ENCODE measurements at regions of chr11 and their contacts with region 1.

Region 1: GRCh38 chr11:1515082-1516060 is 28.8 kb upstream of the MOB2 start:
- DNase-seq: peak; percentile 88
- ATAC-seq: peak; percentile 86
- H3K4me3 Mint-ChIP-seq: no peak overlapping the region
- H3K27ac Mint-ChIP-seq: no peak overlapping the region
- H3K4me1 Mint-ChIP-seq: peaks cover 44% of the 10 kb centered on the region
- H3K27me3 Mint-ChIP-seq: no peaks in the 10 kb centered on the region

Region 2: DNA sequence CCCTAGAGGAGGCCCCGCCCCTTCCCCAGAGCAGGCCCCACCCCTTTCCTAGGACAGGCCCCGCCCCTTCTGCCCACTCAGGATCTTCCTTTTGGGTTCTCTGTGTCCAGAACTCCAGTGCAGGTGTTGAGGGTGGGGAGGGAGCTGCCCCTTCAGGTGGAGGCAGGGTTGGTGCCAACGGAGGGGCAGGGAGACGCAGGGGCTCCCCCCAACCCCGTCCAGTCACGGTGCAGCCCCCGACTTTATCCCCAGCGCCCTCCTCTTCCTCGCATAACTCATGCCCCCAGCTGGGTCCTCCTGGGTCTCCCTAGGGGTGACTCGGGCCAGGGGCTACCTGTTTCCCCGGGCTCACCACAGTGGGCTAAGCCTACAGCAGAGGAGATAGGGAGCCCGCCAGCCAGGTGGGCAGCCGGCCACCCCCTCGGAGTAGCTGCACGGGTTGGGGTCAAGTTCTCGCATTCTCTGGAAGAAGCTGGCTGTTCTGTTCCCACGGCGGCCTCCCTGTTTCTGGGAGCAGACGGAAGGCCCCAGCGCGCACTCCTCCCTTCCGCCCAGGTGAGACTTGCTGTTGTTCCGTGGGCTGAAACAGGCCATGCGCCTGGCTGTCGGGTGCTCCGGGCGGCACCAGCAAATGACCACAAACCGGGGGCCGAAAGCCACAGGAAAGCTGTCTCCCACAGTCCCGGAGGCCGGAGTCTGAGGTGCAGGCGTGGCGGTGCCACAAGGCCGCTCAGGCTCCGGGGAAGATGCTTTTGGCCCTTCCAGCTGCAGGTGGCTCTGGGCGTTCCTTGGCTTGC is 401.8 kb before region 1 on chr11:
- CTCF ChIA-PET with region 1: no interaction called
- POLR2A ChIA-PET with region 1: no interaction called
- intact Hi-C with region 1: loop called in 1 of 2 experiments (anchors 1 kb)
- DNase-seq: peak; percentile 32
- ATAC-seq: peak; percentile 37
- H3K4me3 Mint-ChIP-seq: no peak overlapping the region
- H3K27ac Mint-ChIP-seq: no peak overlapping the region
- H3K4me1 Mint-ChIP-seq: no peaks in the 10 kb centered on the region
- H3K27me3 Mint-ChIP-seq: no peaks in the 10 kb centered on the region

Region 3: GRCh38 chr11:1202776-1203504 is 312.4 kb before region 1 on chr11:
- CTCF ChIA-PET with region 1: interaction called, 8 read pairs
- POLR2A ChIA-PET with region 1: no interaction called
- intact Hi-C with region 1: loop called (anchors 1 kb)
- DNase-seq: peak; percentile 82
- ATAC-seq: peak; percentile 85
- H3K4me3 Mint-ChIP-seq: no peak overlapping the region
- H3K27ac Mint-ChIP-seq: no peak overlapping the region
- H3K4me1 Mint-ChIP-seq: no peaks in the 10 kb centered on the region
- H3K27me3 Mint-ChIP-seq: no peaks in the 10 kb centered on the region

Region 4: DNA sequence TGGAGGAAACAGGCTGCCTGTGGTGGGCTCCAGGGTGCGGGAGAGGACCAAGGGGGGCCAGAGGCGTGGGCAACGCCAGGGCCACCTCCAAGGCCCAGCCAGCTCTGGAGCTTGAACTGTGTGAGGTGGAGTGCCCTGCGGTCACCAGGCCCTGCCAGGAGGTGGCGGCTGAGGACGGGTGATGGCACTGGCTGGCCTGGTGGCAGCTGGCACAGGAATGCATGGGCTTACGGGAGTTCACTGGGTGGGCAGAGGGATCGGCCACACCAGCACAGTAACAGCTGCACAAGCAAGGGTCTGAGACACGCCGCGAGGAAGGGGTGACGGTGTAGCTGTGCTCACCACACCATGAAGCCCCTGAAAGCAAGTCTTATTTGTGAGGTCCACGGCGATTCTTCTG is 221.7 kb before region 1 on chr11:
- CTCF ChIA-PET with region 1: no interaction called
- POLR2A ChIA-PET with region 1: no interaction called
- intact Hi-C with region 1: loop called in 1 of 2 experiments (anchors 5 kb)
- DNase-seq: peak; percentile 49
- ATAC-seq: peak; percentile 65
- H3K4me3 Mint-ChIP-seq: no peak overlapping the region
- H3K27ac Mint-ChIP-seq: no peak overlapping the region
- H3K4me1 Mint-ChIP-seq: no peaks in the 10 kb centered on the region
- H3K27me3 Mint-ChIP-seq: no peaks in the 10 kb centered on the region

Region 5: DNA sequence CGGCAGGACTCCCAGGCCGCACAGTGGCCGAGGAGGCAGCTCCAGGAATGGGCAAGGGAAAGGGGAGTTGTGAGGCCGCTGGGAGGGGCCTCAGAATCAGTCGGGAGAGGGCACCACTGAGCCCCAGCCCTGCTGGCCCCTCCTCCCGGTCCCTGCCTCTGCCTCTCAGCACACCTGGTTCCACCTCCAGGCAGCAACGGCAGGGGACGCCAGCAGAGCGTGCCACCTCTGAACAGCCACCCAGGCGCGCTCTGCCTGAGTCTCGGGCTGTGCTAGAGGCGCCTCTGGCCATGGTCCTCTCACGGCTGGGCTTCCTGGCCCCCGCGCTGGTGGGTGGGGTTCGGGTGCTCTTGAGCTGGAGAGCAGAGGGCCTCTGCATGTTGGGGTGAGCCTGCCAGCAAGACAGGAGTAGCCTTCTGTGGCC is 61.7 kb before region 1 on chr11:
- CTCF ChIA-PET with region 1: interaction called, 3 read pairs
- POLR2A ChIA-PET with region 1: no interaction called
- intact Hi-C with region 1: loop called (anchors 1 to 5 kb)
- DNase-seq: peak; percentile 85
- ATAC-seq: peak; percentile 97
- H3K4me3 Mint-ChIP-seq: no peak overlapping the region
- H3K27ac Mint-ChIP-seq: no peak overlapping the region
- H3K4me1 Mint-ChIP-seq: no peaks in the 10 kb centered on the region
- H3K27me3 Mint-ChIP-seq: no peaks in the 10 kb centered on the region

Region 6: GRCh38 chr11:1640076-1640946 is 124.9 kb after region 1 on chr11:
- CTCF ChIA-PET with region 1: no interaction called
- POLR2A ChIA-PET with region 1: no interaction called
- intact Hi-C with region 1: no loop called
- DNase-seq: peak; percentile 54
- ATAC-seq: peak; percentile 49
- H3K4me3 Mint-ChIP-seq: no peak overlapping the region
- H3K27ac Mint-ChIP-seq: no peak overlapping the region
- H3K4me1 Mint-ChIP-seq: no peaks in the 10 kb centered on the region
- H3K27me3 Mint-ChIP-seq: peaks cover 6% of the 10 kb centered on the region